Thyroid gland (tissue), 4 donors: ENCODE measurements at regions of chr19 and their contacts with region 1.

Region 1: DNA sequence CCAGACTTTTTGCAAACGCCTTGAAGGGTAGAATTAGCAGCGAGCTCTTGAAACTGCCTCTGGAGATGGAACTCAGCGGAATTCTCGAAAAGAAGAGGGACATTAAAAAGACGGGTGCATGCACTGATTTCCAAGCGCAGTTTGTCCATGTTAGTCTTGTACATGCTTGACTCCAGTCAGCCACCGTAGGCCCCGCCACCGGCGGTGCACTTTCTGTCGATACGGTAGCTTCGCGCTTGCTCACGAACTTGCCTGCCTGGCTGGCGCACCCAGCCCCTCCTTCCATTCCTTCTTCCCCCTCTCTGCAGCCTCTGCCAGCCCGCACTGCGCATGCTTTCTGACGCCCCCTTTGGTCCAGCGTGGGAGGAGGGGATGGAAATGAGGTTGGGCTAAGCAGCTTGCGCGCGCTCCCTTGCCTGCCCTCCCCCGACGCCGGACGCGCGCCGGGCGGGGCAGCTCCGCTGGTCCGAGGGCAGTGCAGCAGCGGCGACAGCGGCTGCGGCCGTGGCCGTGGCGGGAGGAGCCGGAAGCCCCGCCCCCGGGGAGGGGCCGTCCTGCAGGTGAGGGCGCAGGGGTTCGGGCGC is at the start of gene ZNF575:
- DNase-seq: peak; percentile 92 to 93
- H3K4me3 ChIP-seq: peak within 1 kb of the TSS; percentile 53 to 61 (median 56)
- H3K27ac ChIP-seq: peak within 1 kb of the TSS; percentile 87 to 92 (median 90)
- H3K4me1 ChIP-seq: peaks cover 13 to 39% of the 10 kb centered on the region in 2 donors
- H3K27me3 ChIP-seq: no peaks in the 10 kb centered on the region
- CTCF ChIP-seq: peak in 1 of 6 experiments; percentile 7
- POLR2A ChIP-seq: peak in 1 of 2 donors; percentile 53
- total RNA-seq, gene ZNF575: 1.4 TPM in 1 of 4 donors, not detected in the others

Region 2: DNA sequence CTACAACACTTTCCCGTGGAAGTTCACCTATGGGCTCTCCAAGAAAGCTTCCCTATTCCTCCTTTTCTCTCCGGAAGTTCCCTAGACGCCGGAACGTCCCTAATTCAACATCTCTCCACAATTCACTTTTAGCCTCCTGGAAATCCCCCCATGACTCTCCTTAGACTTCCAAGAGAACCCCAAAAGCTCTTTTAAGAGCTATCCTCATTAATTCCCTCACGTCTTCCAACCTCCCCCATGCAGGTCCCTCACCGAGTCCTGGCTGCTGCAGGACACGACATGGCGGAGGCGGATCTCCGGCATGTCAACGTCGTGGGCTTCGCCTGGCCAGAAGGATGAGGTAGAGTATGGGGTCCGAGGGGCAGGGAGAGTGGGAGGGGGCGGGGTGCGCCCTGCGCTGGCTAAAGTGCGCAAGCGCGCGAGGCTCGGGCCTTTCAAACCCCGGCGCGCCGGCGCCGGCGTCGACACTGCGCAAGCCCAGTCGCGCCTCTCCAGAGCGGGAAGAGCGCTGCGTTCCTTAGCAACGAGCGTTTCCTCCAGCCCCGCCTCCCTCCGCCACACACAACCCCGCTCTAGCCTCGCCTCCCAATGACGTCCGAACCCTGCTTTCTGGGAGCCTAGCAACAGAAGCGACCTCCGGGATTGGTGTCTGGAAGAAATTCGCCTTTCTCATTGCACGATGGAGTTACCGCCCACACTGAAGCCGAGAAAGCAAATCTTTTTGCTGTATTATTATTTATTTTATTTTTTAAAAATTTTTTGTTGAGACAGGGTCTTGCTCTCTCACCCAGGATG is 42.3 kb after region 1 on chr19 and contains the starts of genes PINLYP and XRCC1:
- intact Hi-C with region 1: loop called (anchors 5 kb)
- DNase-seq: peak; percentile 98
- H3K4me3 ChIP-seq: peak within 1 kb of the TSS; percentile 44 to 98 (median 62)
- H3K27ac ChIP-seq: peak within 1 kb of the TSS; percentile 57 to 77 (median 72)
- H3K4me1 ChIP-seq: peaks cover 16 to 19% of the 10 kb centered on the region in 2 donors
- H3K27me3 ChIP-seq: no peaks in the 10 kb centered on the region
- CTCF ChIP-seq: no peak
- POLR2A ChIP-seq: peak in 1 of 2 donors; percentile 55
- total RNA-seq, gene PINLYP: 11.8 to 19.3 (median 13.2) TPM
- total RNA-seq, gene XRCC1: 29.6 to 38.8 (median 31.3) TPM

Region 3: GRCh38 chr19:43595999-43596841 is 63.2 kb after region 1 on chr19 and contains the starts of genes IRGQ and ZNF576:
- intact Hi-C with region 1: loop called (anchors 10 kb)
- DNase-seq: peak; percentile 100
- H3K4me3 ChIP-seq: peak within 1 kb of the TSS; percentile 55 to 82 (median 76)
- H3K27ac ChIP-seq: peak within 1 kb of the TSS; percentile 94 to 98 (median 95)
- H3K4me1 ChIP-seq: peaks cover 31 to 33% of the 10 kb centered on the region in 2 donors
- H3K27me3 ChIP-seq: no peaks in the 10 kb centered on the region
- CTCF ChIP-seq: no peak
- POLR2A ChIP-seq: peak in 1 of 2 donors; percentile 84
- total RNA-seq, gene IRGQ: 18.0 to 33.5 (median 23.5) TPM
- total RNA-seq, gene ZNF576: 15.7 to 23.5 (median 17.9) TPM

Region 4: GRCh38 chr19:43651758-43652545 is 118.9 kb after region 1 on chr19:
- intact Hi-C with region 1: loop called (anchors 5 kb)
- DNase-seq: peak; percentile 58 to 68
- H3K4me3 ChIP-seq: no peak overlapping the region
- H3K27ac ChIP-seq: no peak overlapping the region
- H3K4me1 ChIP-seq: no peaks in the 10 kb centered on the region
- H3K27me3 ChIP-seq: no peaks in the 10 kb centered on the region
- CTCF ChIP-seq: peak in 5 of 6 experiments; percentile 44 to 78 (median 72)
- POLR2A ChIP-seq: no peak